BJ (cell line): ENCODE measurements at regions of chr22 and their contacts with region 1.

Region 1: GRCh38 chr22:30044369-30044768 is 35.9 kb upstream of the HORMAD2 start:
- DNase-seq: peak; percentile 74
- H3K4me3 ChIP-seq: no peak overlapping the region
- H3K27me3 ChIP-seq: no peaks in the 10 kb centered on the region
- CTCF ChIP-seq: no peak

Region 2: DNA sequence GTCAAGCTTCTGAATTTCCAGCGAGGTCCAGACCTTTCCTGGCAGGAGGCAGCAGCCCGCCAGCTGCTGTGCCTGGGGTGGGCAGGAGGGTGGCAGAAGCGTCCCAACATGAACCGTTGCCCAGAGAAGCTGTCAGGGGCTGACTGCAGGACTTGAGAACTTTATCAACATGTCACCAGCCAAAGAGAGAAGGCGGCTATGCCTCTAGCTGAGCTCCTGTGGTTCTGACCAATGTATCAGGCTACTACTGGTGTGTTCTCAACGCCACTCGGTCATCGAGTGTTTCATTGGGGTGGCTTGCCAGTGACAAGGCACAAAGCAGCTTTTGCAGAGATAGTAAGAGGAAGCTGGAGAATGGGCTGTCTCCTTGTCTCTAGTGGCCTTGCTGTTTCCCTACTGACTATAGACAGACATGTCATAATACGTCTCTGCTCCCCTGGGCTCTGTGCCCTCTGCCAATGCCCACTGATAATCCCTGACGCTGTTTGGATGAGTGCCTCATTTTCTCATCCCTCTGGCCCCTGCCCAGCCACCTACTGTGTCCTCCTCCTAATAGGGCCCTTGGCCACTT is 188.7 kb before region 1 on chr22:
- CTCF ChIA-PET with region 1: no interaction called
- POLR2A ChIA-PET with region 1: interaction called, 16 read pairs
- DNase-seq: no peak
- H3K4me3 ChIP-seq: no peak overlapping the region
- H3K27me3 ChIP-seq: peaks cover 2% of the 10 kb centered on the region; the same call in 1 of the 2 replicates
- CTCF ChIP-seq: no peak